ENCODE measurements at regions of chr13 and their contacts with region 1.

Region 1: DNA sequence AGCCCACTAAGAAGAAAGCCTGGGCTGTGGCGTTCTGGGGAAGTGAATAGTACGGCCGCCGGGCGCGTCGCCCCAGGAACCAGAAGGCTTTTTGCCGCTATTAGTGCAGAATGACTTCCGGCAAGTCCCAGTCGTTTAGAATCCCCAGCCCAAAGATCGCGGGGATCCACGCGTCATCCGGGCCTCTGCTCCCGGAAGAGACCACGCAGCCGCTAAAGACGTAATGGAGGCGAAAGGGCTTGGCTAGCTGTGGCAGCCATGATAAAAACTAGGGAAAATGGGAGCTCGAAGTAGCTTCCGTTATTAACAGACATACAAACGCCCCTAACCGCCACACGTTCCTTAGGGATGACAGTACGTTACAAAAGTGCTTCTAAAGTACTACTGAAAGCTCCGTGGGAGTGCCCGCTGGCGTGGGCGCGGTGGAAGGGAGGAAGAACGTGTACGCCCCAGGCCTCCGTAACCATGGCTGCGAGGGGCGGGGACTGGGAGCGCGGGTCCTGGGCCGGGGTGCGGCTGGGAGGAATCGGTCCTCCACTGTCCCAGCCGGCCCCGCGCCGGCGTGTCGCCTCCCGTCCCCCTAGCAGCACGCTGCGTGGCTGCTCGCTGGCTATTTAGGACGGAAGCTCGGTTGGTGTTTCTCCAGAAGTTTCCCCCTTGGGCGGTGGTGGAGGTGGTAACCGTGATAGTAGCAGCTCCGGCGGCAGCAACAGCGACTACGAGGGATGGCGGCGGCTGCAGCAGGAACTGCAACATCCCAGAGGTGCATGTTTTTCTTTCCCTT is at the start of gene SUGT1:
- DNase-seq: peak; percentile 97 to 98
- ATAC-seq: peak; percentile 95
- total RNA-seq, gene SUGT1: 39.8 to 41.6 TPM

Region 2: DNA sequence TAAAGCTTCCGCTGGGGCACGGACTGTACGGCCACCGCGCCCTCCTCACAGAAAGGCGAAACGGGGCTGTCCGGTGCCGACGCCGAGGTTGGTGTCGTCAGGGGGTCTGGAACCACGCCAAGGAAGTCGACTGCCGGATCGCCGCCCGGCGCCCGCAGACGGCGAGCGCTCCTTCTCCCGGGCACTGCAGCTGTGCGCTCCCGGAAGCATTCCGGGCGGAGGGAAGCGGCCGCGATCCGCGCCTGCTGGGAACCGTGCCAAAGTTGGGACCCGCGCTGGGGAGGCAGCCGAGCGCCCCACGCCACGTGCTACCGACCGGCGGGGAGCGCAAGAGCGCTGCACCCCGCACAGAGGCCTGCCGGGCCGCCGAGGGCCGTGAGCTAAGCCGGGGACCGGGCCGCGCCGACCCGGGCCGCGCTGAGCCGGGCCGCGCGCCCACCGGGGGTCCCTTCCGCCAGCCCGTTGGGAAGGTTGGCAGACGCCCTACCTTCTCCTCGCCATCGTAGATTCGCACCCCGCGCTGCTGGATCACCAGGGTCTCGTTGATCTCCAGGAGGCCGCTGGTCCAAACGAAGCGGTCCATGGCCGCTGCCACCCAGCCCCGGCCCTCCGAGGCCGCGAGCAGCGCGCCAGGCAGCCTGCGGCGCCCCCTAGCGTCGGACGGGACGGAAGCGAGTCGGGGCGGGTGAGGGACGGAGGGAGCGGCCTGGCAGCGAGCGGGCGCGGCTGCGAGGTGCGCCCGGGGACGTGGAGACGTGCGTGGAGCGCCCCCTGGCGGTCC is 202.2 kb before region 1 on chr13 and contains the start of gene VPS36:
- intact Hi-C with region 1: loop called in 1 of 2 experiments (anchors 10 kb)
- DNase-seq: peak; percentile 91 to 99
- ATAC-seq: peak; percentile 78
- total RNA-seq, gene VPS36: 53.0 to 61.4 TPM

Region 3: GRCh38 chr13:52617070-52618060 is 35.0 kb before region 1 on chr13:
- intact Hi-C with region 1: loop called in 1 of 2 experiments (anchors 5 kb)
- DNase-seq: peak; percentile 83
- ATAC-seq: peak; percentile 96

Region 4: DNA sequence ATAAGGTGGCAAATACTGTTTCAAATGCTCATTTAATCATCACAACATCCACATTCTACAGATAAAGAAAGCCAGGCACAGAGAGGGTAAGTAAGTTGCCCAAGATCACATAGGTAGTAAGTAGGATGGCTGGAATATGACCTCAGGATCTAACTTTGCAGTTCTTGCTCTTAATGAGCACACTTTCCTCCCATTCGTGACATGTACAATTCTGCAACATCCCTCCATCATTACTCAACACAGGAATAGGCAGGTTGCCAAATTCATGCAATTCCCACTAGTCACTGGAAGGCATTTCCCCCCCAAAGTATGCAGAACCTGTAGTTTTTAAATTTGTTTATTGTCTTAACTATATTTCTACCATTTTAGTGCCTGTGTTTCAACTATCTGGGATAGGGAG is 485.4 kb after region 1 on chr13:
- intact Hi-C with region 1: no loop called
- DNase-seq: no peak
- ATAC-seq: no peak

Measured in left colon (tissue), 2 donors.